Caco-2 (cell line): ENCODE measurements at regions of chr5 and their contacts with region 1.

Region 1: GRCh38 chr5:79235634-79236363 is at the start of gene JMY:
- DNase-seq: peak; percentile 85 to 88
- H3K4me3 ChIP-seq: peak within 1 kb of the TSS; percentile 70
- H3K4me3 Mint-ChIP-seq: peak within 1 kb of the TSS; percentile 78
- H3K27ac Mint-ChIP-seq: peak within 1 kb of the TSS; percentile 97
- H3K4me1 ChIP-seq: peaks cover 4% of the 10 kb centered on the region; the same call in 1 of the 2 replicates
- H3K4me1 Mint-ChIP-seq: no peaks in the 10 kb centered on the region
- H3K27me3 ChIP-seq: no peaks in the 10 kb centered on the region
- H3K27me3 Mint-ChIP-seq: no peaks in the 10 kb centered on the region
- CTCF ChIP-seq: no peak
- total RNA-seq, gene JMY: 10.5 and 11.3 TPM in 2 replicates

Region 2: DNA sequence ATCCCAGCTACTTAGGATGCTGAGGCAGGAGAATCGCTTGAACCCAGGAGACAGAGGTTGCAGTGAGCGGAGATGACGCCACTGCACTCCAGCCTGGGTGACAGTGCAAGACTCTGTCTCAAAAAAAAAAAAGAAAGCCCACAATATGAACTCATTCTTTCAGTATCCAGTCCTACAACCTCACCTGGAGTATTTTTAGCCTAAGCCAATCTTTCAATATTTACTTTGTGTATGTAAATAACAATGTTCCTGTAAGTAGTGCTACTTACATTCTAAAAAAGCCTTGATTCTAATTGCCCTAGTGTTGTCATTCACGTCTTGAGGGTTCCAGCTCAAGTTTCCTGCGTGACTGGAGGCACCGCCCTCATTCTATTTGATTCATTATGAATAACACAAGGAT is 62.2 kb before region 1 on chr5:
- CTCF ChIA-PET with region 1: no interaction called
- POLR2A ChIA-PET with region 1: no interaction called
- intact Hi-C with region 1: loop called (anchors 2 kb)
- DNase-seq: peak in 1 of 2 experiments; percentile 42
- H3K4me3 ChIP-seq: no peak overlapping the region
- H3K4me3 Mint-ChIP-seq: no peak overlapping the region
- H3K27ac Mint-ChIP-seq: no peak overlapping the region
- H3K4me1 ChIP-seq: peaks cover 29% of the 10 kb centered on the region
- H3K4me1 Mint-ChIP-seq: peaks cover 5% of the 10 kb centered on the region
- H3K27me3 ChIP-seq: no peaks in the 10 kb centered on the region
- H3K27me3 Mint-ChIP-seq: no peaks in the 10 kb centered on the region
- CTCF ChIP-seq: no peak

Region 3: DNA sequence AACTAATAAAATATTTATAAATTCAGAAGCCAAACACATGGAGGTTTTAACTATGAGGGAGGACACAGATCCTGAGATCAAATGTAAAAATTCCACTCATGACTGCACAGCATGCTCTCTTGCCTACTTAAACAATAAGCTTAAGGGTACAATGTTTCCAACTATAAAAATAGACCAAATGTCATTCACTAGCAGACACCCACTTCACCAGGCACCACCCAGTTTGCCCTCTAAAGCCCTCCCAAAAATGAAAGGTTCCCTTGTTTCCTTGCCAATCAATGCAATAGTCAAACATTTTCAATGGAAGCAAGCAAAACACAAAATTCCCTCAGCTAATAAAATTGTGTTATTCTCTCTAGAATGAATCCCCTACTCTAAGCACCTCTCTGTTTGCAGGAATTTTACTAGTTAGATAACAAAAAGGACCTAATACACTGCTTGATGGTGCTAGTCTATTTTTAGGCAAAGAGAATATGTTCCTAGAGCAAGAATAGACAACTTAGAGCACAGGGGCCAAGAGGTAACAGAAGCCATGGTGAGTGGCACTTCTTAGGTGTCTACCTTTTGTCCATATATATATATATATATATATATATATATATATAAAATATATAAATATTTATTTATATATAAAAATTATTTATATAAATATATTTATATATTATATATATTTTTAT is 142.8 kb after region 1 on chr5:
- CTCF ChIA-PET with region 1: no interaction called
- POLR2A ChIA-PET with region 1: no interaction called
- intact Hi-C with region 1: no loop called
- DNase-seq: no peak
- H3K4me3 ChIP-seq: no peak overlapping the region
- H3K4me3 Mint-ChIP-seq: no peak overlapping the region
- H3K27ac Mint-ChIP-seq: no peak overlapping the region
- H3K4me1 ChIP-seq: no peaks in the 10 kb centered on the region
- H3K4me1 Mint-ChIP-seq: no peaks in the 10 kb centered on the region
- H3K27me3 ChIP-seq: no peaks in the 10 kb centered on the region
- H3K27me3 Mint-ChIP-seq: no peaks in the 10 kb centered on the region
- CTCF ChIP-seq: no peak